Caco-2 (cell line): ENCODE measurements at regions of chr11 and their contacts with region 1.

Region 1: DNA sequence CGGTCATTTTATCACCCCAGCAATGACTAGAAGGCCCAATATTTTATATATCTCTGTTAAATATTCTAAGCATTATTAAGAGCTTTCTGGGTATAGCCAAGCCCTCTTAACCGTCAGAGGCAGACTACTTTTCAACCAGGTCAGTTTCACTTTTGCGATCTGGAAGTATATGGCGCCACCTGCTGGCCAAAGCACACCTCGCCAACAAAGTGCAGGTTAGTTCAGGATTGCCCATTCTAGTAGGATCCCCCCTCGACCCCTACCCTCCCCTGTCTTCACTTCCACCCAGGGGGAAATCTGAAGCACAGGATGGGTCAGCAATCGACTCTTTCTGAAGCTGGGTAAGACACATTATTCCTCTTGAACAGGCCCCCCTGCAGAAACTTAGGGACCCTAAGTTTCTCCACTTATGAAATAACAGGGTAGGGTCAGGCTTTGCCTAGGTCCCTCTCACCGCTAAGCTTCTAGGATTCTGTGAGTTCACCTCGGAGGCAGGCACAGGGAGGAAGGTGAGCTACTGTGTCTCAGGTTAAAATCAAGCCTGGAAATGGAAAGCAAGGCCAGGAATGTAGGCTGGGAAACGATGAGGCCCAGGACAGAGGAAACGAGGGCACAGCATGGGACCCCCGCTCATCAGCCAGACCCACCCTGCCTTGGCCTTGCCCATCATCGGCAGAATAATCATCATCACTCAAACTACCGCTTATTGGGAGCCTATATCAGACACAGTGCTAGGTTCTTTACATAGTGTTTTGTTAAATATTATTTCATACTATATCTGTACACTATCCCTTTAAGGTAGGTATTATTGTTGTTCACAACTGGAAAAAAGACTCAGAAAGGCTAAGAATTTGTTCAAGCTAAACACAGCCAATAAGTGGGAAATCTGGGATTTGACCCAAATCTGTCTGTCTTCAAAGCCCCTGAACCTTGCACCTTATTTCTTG is 35.6 kb downstream of the KCNJ1 start:
- DNase-seq: peak; percentile 82 to 88
- H3K4me3 ChIP-seq: no peak overlapping the region
- H3K4me3 Mint-ChIP-seq: no peak overlapping the region
- H3K27ac Mint-ChIP-seq: no peak overlapping the region
- H3K4me1 ChIP-seq: peaks cover 12% of the 10 kb centered on the region
- H3K4me1 Mint-ChIP-seq: peaks cover 8% of the 10 kb centered on the region
- H3K27me3 ChIP-seq: no peaks in the 10 kb centered on the region
- H3K27me3 Mint-ChIP-seq: peaks cover 8% of the 10 kb centered on the region
- CTCF ChIP-seq: peak; percentile 97 to 98

Region 2: GRCh38 chr11:128026596-128026995 is 804.9 kb before region 1 on chr11:
- CTCF ChIA-PET with region 1: no interaction called
- POLR2A ChIA-PET with region 1: no interaction called
- intact Hi-C with region 1: loop called (anchors 1 kb)
- DNase-seq: no peak
- H3K4me3 ChIP-seq: no peak overlapping the region
- H3K4me3 Mint-ChIP-seq: no peak overlapping the region
- H3K27ac Mint-ChIP-seq: no peak overlapping the region
- H3K4me1 ChIP-seq: no peaks in the 10 kb centered on the region
- H3K4me1 Mint-ChIP-seq: peaks cover 7% of the 10 kb centered on the region
- H3K27me3 ChIP-seq: no peaks in the 10 kb centered on the region; the same call in 1 of the 2 replicates
- H3K27me3 Mint-ChIP-seq: peaks cover 14% of the 10 kb centered on the region
- CTCF ChIP-seq: no peak

Region 3: GRCh38 chr11:128172046-128172878 is 659.2 kb before region 1 on chr11:
- CTCF ChIA-PET with region 1: no interaction called
- POLR2A ChIA-PET with region 1: no interaction called
- intact Hi-C with region 1: loop called (anchors 1 kb)
- DNase-seq: peak; percentile 84 to 88
- H3K4me3 ChIP-seq: no peak overlapping the region
- H3K4me3 Mint-ChIP-seq: no peak overlapping the region
- H3K27ac Mint-ChIP-seq: no peak overlapping the region
- H3K4me1 ChIP-seq: peaks cover 3% of the 10 kb centered on the region; the same call in 1 of the 2 replicates
- H3K4me1 Mint-ChIP-seq: no peaks in the 10 kb centered on the region
- H3K27me3 ChIP-seq: no peaks in the 10 kb centered on the region
- H3K27me3 Mint-ChIP-seq: peaks cover 12% of the 10 kb centered on the region
- CTCF ChIP-seq: peak; percentile 94 to 96

Region 4: DNA sequence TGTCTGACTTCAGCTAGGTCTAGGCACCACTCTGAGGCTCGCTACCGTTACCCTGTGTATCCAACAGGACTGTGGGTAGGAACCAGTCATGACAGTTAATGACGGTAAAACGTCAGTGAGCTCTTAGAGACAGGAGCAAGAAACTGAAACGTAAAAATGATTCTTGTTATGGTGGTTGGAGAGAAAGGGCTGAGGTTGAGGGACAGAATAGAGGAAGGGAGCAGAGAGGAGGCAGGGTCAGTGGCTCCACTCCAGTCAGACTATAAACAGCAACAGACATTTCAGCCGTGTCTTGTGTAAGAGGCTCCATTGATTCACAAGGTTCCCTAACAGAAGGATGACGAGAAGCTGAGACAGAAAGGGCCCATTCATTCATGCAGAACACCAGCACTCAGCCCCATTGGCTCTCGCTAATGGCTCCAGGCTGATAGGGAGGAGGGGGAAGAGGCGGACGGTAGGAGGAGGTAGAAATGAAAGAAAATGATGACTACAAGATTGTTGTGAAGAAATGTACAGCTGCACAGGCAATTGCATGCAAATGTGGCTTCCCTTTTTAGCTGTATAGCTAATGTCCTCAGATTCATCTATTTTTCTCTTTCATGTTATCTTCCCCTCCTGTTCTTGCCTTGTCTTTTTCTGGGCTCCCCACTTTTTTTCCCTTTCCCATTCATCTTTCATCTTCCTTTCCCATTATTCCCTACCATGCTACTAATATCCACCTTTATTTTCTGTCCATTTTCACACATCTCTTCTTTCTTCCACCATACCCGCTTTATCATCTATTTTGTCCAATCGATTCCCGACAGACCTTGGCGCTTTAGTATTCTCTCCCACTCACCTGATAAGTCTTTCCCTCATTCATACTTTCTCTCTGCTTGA is 278.4 kb before region 1 on chr11:
- CTCF ChIA-PET with region 1: no interaction called
- POLR2A ChIA-PET with region 1: no interaction called
- intact Hi-C with region 1: loop called (anchors 1 kb)
- DNase-seq: no peak
- H3K4me3 ChIP-seq: no peak overlapping the region
- H3K4me3 Mint-ChIP-seq: no peak overlapping the region
- H3K27ac Mint-ChIP-seq: no peak overlapping the region
- H3K4me1 ChIP-seq: peaks cover 3% of the 10 kb centered on the region; the same call in 1 of the 2 replicates
- H3K4me1 Mint-ChIP-seq: peaks cover 7% of the 10 kb centered on the region
- H3K27me3 ChIP-seq: no peaks in the 10 kb centered on the region; the same call in 1 of the 2 replicates
- H3K27me3 Mint-ChIP-seq: peaks cover 7% of the 10 kb centered on the region
- CTCF ChIP-seq: no peak

Region 5: DNA sequence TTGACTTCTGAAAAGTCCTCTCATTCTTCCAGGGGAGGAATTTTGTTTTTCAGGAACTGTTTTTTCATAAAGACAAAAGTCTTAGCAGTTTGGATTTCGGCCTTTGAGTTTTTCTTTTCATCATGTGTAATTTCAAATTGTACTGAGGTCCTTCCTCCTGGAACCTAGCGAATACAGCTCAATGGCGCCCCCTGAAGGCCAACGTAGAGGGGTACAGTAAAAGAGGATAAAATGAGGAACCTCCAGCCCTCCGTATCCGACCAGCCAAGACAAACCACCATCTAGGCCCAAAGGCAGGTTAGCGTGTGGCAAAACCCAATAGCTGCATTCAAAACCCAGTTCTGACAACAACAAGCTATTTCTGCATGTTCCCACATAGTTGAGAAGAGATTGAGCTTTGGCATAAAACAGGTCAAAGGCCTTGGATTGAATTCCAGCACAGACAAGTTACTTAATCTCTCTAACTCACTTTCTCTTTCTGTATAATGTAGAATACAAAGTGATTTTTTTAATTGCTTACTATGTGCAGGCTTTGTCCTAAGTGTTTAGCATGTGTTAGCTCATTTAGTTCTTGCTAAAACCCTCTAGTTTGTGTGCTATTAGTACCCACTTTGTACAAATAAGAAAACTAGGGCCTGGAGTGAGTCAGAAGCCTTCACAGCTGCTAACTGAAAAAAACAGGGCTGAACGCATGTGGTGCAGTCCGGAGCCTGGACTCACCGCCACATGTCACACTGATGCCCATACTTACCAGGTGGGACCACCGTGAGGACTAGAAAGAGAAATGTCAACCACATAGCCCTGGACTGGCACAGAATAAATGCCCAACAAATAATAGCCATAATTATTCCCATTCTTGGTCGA is 200.8 kb before region 1 on chr11:
- CTCF ChIA-PET with region 1: interaction called, 3 read pairs
- POLR2A ChIA-PET with region 1: no interaction called
- intact Hi-C with region 1: loop called (anchors 1 kb)
- DNase-seq: peak; percentile 82 to 88
- H3K4me3 ChIP-seq: no peak overlapping the region
- H3K4me3 Mint-ChIP-seq: no peak overlapping the region
- H3K27ac Mint-ChIP-seq: no peak overlapping the region
- H3K4me1 ChIP-seq: no peaks in the 10 kb centered on the region
- H3K4me1 Mint-ChIP-seq: no peaks in the 10 kb centered on the region
- H3K27me3 ChIP-seq: peaks cover 1% of the 10 kb centered on the region; the same call in 1 of the 2 replicates
- H3K27me3 Mint-ChIP-seq: peaks cover 10% of the 10 kb centered on the region
- CTCF ChIP-seq: peak; percentile 96 to 97

Region 6: GRCh38 chr11:128802358-128802981 is 29.0 kb before region 1 on chr11:
- CTCF ChIA-PET with region 1: interaction called, 5 read pairs
- POLR2A ChIA-PET with region 1: no interaction called
- intact Hi-C with region 1: loop called (anchors 2 kb)
- DNase-seq: peak in 1 of 2 experiments; percentile 51
- H3K4me3 ChIP-seq: no peak overlapping the region
- H3K4me3 Mint-ChIP-seq: no peak overlapping the region
- H3K27ac Mint-ChIP-seq: no peak overlapping the region
- H3K4me1 ChIP-seq: no peaks in the 10 kb centered on the region
- H3K4me1 Mint-ChIP-seq: peaks cover 7% of the 10 kb centered on the region
- H3K27me3 ChIP-seq: no peaks in the 10 kb centered on the region
- H3K27me3 Mint-ChIP-seq: peaks cover 36% of the 10 kb centered on the region
- CTCF ChIP-seq: peak; percentile 66 to 81